ENCODE measurements at regions of chr11 and their contacts with region 1.

Region 1: GRCh38 chr11:108620958-108621772 is 27.6 kb upstream of the EXPH5 start:
- DNase-seq: no peak
- H3K4me3 Mint-ChIP-seq: no peak overlapping the region
- H3K27ac Mint-ChIP-seq: no peak overlapping the region
- H3K4me1 Mint-ChIP-seq: peaks cover 24% of the 10 kb centered on the region
- H3K27me3 Mint-ChIP-seq: peaks cover 10% of the 10 kb centered on the region

Region 2: GRCh38 chr11:108199446-108200321 is 421.5 kb before region 1 on chr11:
- CTCF ChIA-PET with region 1: no interaction called
- intact Hi-C with region 1: loop called (anchors 1 kb)
- DNase-seq: peak; percentile 94
- H3K4me3 Mint-ChIP-seq: no peak overlapping the region
- H3K27ac Mint-ChIP-seq: peak overlapping the region; percentile 48
- H3K4me1 Mint-ChIP-seq: peaks cover 86% of the 10 kb centered on the region
- H3K27me3 Mint-ChIP-seq: no peaks in the 10 kb centered on the region

Region 3: GRCh38 chr11:108302121-108302785 is 318.9 kb before region 1 on chr11:
- CTCF ChIA-PET with region 1: no interaction called
- intact Hi-C with region 1: loop called (anchors 1 kb)
- DNase-seq: no peak
- H3K4me3 Mint-ChIP-seq: no peak overlapping the region
- H3K27ac Mint-ChIP-seq: peak overlapping the region; percentile 50
- H3K4me1 Mint-ChIP-seq: peaks cover 36% of the 10 kb centered on the region
- H3K27me3 Mint-ChIP-seq: no peaks in the 10 kb centered on the region

Region 4: GRCh38 chr11:108497317-108498045 is 123.7 kb before region 1 on chr11:
- CTCF ChIA-PET with region 1: no interaction called
- intact Hi-C with region 1: loop called (anchors 1 kb)
- DNase-seq: peak; percentile 84
- H3K4me3 Mint-ChIP-seq: peak overlapping the region; percentile 85
- H3K27ac Mint-ChIP-seq: peak overlapping the region; percentile 92
- H3K4me1 Mint-ChIP-seq: peaks cover 16% of the 10 kb centered on the region
- H3K27me3 Mint-ChIP-seq: no peaks in the 10 kb centered on the region

Region 5: GRCh38 chr11:108664730-108665525 is 43.8 kb after region 1 on chr11 and contains the start of gene DDX10:
- CTCF ChIA-PET with region 1: no interaction called
- intact Hi-C with region 1: loop called (anchors 1 kb)
- DNase-seq: peak; percentile 99
- H3K4me3 Mint-ChIP-seq: peak within 1 kb of the TSS; percentile 99
- H3K27ac Mint-ChIP-seq: peak within 1 kb of the TSS; percentile 86
- H3K4me1 Mint-ChIP-seq: peaks cover 38% of the 10 kb centered on the region
- H3K27me3 Mint-ChIP-seq: no peaks in the 10 kb centered on the region
- total RNA-seq, gene DDX10: 36.6 to 43.0 TPM